ENCODE measurements at regions of chr3 and their contacts with region 1.

Region 1: DNA sequence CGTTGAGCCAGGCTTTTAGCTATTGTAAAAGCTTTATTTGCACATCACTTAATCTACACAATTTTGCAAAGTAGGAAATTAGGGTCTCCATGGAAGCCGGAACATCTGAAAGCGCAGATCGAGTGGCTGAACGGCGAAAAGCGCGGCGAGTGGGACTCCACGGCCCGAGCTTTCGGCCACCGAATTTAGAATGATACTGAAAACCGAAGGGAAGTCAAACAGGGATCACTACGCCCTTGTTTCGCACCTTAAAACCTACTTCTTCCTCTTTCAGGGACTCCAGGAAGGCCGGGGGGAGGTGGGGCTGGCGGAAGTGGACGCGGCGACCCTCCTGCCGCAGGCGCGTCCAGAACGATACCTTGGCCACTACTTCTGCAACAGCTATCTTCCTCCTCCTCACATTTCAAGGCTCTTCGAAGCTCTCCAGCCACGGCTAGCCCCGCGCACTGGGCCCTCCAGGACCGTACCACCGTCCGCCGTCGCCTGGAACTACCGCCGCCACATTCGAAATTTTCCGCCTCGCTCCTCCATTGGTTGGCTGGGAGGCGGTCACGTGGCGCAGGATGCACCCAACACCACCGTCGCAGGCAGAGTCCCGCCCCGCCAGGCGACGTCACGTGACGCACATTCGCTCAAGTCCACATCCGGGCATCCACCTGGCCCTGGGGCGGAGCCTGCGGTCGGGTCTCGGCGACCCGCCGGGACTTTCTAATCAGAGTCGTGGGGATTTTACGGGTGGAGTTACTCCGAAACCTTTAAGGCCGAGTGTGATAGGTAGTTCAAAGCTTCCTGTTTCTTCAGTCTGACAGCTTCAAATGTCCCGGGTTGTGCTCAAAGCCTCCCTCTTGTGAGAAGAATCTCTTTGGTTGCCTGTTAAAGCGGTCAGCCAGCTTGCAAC is at the start of gene SGO1:
- DNase-seq: peak; percentile 100
- H3K4me3 Mint-ChIP-seq: no peak within 1 kb of the TSS
- H3K27ac Mint-ChIP-seq: no peak within 1 kb of the TSS
- H3K4me1 Mint-ChIP-seq: peaks cover 17% of the 10 kb centered on the region
- H3K27me3 Mint-ChIP-seq: no peaks in the 10 kb centered on the region
- total RNA-seq, gene SGO1: 35.6 to 42.4 TPM

Region 2: DNA sequence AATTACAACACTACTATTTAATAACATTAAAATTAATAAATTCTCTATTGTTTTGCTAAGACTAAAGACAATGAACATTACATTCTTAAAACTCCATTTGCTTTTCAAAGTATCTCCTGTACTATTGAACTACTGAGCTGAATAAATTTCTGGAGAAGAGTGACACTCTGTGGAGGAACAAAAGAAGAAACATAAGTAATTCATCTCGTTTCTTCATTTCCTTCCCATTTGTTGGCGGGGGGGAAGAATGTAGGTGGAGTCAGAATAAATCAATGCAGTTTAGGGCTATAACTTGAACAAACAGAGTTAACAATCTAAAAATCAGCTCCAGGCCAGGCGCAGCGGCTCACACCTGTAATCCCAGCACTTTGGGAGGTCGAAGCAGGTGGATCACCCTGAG is 284.6 kb before region 1 on chr3:
- CTCF ChIA-PET with region 1: no interaction called
- POLR2A ChIA-PET with region 1: no interaction called
- DNase-seq: no peak
- H3K4me3 Mint-ChIP-seq: no peak overlapping the region
- H3K27ac Mint-ChIP-seq: no peak overlapping the region
- H3K4me1 Mint-ChIP-seq: no peaks in the 10 kb centered on the region
- H3K27me3 Mint-ChIP-seq: no peaks in the 10 kb centered on the region

Region 3: GRCh38 chr3:20039766-20040475 is 146.0 kb before region 1 on chr3 and contains the start of gene KAT2B:
- CTCF ChIA-PET with region 1: interaction called, 16 read pairs
- POLR2A ChIA-PET with region 1: interaction called, 3 read pairs
- DNase-seq: peak; percentile 84
- H3K4me3 Mint-ChIP-seq: peak within 1 kb of the TSS; percentile 96
- H3K27ac Mint-ChIP-seq: peak within 1 kb of the TSS; percentile 98
- H3K4me1 Mint-ChIP-seq: peaks cover 49% of the 10 kb centered on the region
- H3K27me3 Mint-ChIP-seq: no peaks in the 10 kb centered on the region
- total RNA-seq, gene KAT2B: 84.5 to 91.3 TPM